Upper lobe of right lung (tissue), 1 donor: ENCODE measurements at regions of chr2 and their contacts with region 1.

Region 1: DNA sequence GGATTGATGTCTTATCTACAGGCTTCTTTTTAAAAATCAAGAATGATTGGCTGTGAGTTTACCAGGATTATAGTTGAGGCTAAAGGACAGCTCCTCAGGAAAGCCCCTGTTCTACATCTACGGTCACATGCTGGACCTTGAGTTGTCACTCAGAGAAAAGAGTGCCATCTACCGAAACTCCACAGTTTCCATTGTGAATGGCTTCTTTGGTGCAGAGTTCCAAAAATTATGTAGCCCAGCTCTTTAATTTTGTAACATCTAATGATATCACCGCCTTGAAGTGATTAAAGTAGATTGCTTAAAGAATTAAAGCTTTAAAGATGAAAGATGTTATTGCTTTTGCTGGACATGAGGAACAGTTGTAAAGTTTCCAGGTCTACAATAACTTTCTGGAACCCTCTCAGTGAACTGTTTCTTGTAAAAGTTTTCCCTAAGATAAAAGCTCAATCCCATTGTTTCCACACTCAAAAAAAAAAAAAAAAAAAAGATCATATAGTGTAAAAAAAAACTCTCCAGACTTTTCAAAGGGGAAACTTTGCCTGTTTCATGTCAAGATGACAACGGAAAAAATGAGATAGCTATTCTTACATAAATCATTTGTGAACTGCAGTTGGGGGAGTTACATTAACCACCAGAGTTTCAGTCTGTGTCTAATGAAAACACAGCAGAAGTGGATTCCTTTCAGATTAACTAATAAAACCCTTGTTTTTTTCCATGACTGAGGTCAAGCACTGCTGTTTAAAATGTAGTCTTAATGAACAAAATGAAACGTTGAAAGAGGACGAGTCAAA is 4.3 kb downstream of the COL3A1 start:
- DNase-seq: no peak
- ATAC-seq: peak; percentile 31
- H3K4me3 ChIP-seq: peak overlapping the region; percentile 51
- H3K27ac ChIP-seq: peak overlapping the region; percentile 28
- H3K4me1 ChIP-seq: no peaks in the 10 kb centered on the region
- H3K27me3 ChIP-seq: no peaks in the 10 kb centered on the region
- CTCF ChIP-seq: peak; percentile 38

Region 2: GRCh38 chr2:188524519-188525113 is 453.9 kb before region 1 on chr2:
- intact Hi-C with region 1: loop called (anchors 10 kb)
- DNase-seq: no peak
- ATAC-seq: peak; percentile 62
- H3K4me3 ChIP-seq: no peak overlapping the region
- H3K27ac ChIP-seq: no peak overlapping the region
- H3K4me1 ChIP-seq: no peaks in the 10 kb centered on the region
- H3K27me3 ChIP-seq: no peaks in the 10 kb centered on the region
- CTCF ChIP-seq: peak; percentile 85